MCF 10A (cell line): ENCODE measurements at regions of chr1 and their contacts with region 1.

Region 1: DNA sequence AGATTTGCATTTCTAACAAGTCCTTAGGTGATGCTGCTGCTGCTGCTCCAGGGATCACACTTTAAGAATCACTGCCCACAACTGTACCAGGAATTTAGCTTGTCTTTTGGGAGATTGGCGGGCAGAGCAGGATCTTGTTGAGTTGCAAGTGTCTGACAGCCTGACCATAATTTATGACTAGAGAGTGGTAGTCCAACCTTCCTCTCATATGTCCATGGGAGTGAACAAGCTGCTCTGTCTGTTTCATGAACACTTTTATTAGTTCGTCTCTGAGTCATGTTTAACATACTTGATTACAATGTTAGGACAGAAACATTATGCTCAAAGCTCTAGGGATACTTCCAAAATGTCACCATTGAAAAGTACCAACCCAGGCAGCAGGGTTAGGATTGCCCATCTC is 169.6 kb downstream of the TGFB2 start:
- DNase-seq: no peak
- H3K4me3 Mint-ChIP-seq: no peak overlapping the region
- H3K27ac Mint-ChIP-seq: no peak overlapping the region
- H3K4me1 Mint-ChIP-seq: peaks cover 11% of the 10 kb centered on the region
- H3K27me3 Mint-ChIP-seq: no peaks in the 10 kb centered on the region
- CTCF ChIP-seq: no peak

Region 2: GRCh38 chr1:218529646-218530310 is 15.1 kb after region 1 on chr1:
- CTCF ChIA-PET with region 1: interaction called, 13 read pairs
- POLR2A ChIA-PET with region 1: interaction called, 3 read pairs
- intact Hi-C with region 1: no loop called
- DNase-seq: no peak
- H3K4me3 Mint-ChIP-seq: no peak overlapping the region
- H3K27ac Mint-ChIP-seq: no peak overlapping the region
- H3K4me1 Mint-ChIP-seq: no peaks in the 10 kb centered on the region
- H3K27me3 Mint-ChIP-seq: no peaks in the 10 kb centered on the region
- CTCF ChIP-seq: no peak

Region 3: DNA sequence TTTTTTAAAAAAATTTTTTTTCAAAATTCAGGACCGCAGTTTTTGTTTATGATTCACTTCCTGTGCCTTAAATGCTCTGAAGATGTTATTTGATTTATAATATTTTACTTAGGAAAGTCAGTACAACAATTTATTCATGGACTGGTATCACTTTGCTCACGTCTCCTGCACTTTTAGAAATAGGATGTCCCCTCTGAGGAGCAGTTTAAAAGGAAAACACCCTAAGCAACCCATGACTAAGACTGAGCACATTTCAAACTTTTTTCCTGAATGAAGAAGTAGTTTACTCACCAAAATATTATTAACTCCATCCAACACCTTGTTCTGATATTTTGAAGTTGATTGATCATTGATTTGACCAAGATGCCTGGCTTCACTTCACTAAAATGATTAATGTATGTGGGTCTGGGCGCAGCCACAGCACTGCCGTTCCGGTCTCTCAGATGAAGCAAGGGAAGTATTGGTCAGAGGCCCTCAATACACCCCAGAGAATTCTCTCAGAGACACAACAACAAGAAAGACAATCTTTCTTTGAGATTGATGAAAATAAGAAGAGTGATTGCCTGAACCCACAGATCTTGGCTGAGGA is 54.4 kb after region 1 on chr1:
- CTCF ChIA-PET with region 1: no interaction called
- POLR2A ChIA-PET with region 1: no interaction called
- intact Hi-C with region 1: no loop called
- DNase-seq: no peak
- H3K4me3 Mint-ChIP-seq: no peak overlapping the region
- H3K27ac Mint-ChIP-seq: no peak overlapping the region
- H3K4me1 Mint-ChIP-seq: peaks cover 11% of the 10 kb centered on the region
- H3K27me3 Mint-ChIP-seq: no peaks in the 10 kb centered on the region
- CTCF ChIP-seq: no peak